Activated CD4-positive, alpha-beta memory T cell treated with anti-CD3 and anti-CD28 coated beads for 36 hours (primary cell): ENCODE measurements at regions of chr1 and their contacts with region 1.

Region 1: GRCh38 chr1:36149237-36149972 is at the start of gene TRAPPC3:
- DNase-seq: peak; percentile 100
- H3K4me3 Mint-ChIP-seq: peak within 1 kb of the TSS; percentile 100
- H3K27ac Mint-ChIP-seq: peak within 1 kb of the TSS; percentile 92
- H3K4me1 Mint-ChIP-seq: peaks cover 67% of the 10 kb centered on the region
- H3K27me3 Mint-ChIP-seq: no peaks in the 10 kb centered on the region
- total RNA-seq, gene TRAPPC3: 56.7 to 56.8 TPM

Region 2: DNA sequence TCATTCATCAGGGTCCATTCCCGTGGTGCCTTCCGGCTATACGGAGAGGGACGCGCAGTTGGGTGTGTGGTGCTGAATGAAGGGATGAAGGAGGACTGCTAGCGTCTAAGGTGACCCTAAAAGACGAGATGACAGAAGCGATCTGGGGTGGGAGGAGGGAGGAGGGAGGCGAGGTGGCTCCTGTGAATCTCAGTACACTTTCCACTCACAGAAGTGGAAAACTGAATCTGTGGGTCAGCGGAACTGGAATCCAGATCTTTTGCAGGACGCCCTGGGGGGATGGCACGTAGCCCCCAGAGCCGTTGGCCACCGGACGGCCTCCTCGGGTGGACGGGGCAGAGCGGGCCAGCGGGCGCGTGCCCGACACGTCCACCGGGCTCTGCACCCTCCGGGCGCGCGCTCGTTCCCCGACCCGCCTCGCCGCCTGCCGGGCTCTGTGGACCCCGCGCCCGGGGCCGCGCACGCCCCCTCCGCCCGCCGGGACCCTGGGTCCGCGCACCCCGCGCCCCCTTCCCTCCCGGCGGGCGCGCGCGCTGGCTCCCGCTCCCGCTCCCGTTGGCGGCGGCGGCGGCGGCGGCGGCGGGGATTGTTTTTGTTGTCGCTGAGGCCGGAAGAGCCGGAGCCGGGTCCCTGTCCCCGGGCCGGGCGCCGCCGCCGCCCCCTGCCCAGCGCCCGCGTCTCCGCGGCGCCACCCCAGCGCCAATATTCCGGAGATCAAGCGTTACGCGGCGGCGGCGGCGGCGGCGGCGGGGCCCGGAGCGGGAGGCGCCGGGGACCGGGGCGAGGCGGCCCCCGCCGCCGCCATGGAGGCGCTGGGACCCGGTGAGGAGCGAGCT is 341.6 kb before region 1 on chr1 and contains the start of gene AGO4:
- CTCF ChIA-PET with region 1: no interaction called
- POLR2A ChIA-PET with region 1: no interaction called
- intact Hi-C with region 1: no loop called
- DNase-seq: peak; percentile 41
- H3K4me3 Mint-ChIP-seq: peak within 1 kb of the TSS; percentile 86
- H3K27ac Mint-ChIP-seq: peak within 1 kb of the TSS; percentile 81
- H3K4me1 Mint-ChIP-seq: peaks cover 36% of the 10 kb centered on the region
- H3K27me3 Mint-ChIP-seq: no peaks in the 10 kb centered on the region
- total RNA-seq, gene AGO4: 5.1 to 6.0 TPM

Region 3: GRCh38 chr1:35866991-35867390 is 282.4 kb before region 1 on chr1:
- CTCF ChIA-PET with region 1: no interaction called
- POLR2A ChIA-PET with region 1: no interaction called
- intact Hi-C with region 1: no loop called
- DNase-seq: no peak
- H3K4me3 Mint-ChIP-seq: no peak overlapping the region
- H3K27ac Mint-ChIP-seq: no peak overlapping the region
- H3K4me1 Mint-ChIP-seq: no peaks in the 10 kb centered on the region
- H3K27me3 Mint-ChIP-seq: no peaks in the 10 kb centered on the region

Region 4: DNA sequence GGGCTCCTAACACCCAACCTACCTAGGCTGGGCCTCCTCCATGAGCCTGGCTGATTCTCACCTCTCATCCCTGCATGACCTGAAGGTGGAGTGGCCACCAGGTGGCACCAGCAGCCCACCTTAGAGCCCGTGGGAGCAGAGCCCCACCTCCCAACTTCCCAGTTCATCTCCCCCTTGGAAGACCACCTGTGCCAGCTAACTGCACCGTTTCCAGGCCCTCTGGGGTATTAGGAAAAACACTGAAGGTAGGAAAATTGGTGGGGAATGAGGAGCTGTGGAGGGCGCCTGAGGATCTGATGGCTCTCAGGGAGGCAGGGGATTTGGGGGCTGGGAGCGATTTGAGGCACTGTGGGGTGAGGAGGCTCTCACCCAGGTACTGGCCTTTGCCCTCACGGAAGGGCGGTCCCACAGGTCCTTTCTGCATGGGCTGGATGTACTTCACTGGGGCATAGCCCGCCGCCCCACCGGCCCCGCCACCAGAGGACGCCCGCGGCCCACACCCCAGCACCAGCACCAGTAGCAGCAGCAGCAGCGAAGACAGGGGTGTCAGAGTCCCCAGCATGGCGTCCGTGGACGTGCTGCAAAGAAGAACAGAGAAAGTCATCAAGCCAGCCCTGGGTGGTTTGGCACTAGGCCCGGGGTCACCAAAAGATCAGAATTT is 49.6 kb before region 1 on chr1:
- CTCF ChIA-PET with region 1: interaction called, 10 read pairs
- POLR2A ChIA-PET with region 1: interaction called, 3 read pairs
- intact Hi-C with region 1: loop called (anchors 5 kb)
- DNase-seq: peak; percentile 84
- H3K4me3 Mint-ChIP-seq: no peak overlapping the region
- H3K27ac Mint-ChIP-seq: no peak overlapping the region
- H3K4me1 Mint-ChIP-seq: no peaks in the 10 kb centered on the region
- H3K27me3 Mint-ChIP-seq: no peaks in the 10 kb centered on the region

Region 5: GRCh38 chr1:36170643-36171412 is 21.4 kb after region 1 on chr1:
- CTCF ChIA-PET with region 1: interaction called, 10 read pairs
- POLR2A ChIA-PET with region 1: no interaction called
- intact Hi-C with region 1: no loop called
- DNase-seq: no peak
- H3K4me3 Mint-ChIP-seq: no peak overlapping the region
- H3K27ac Mint-ChIP-seq: no peak overlapping the region
- H3K4me1 Mint-ChIP-seq: peaks cover 24% of the 10 kb centered on the region
- H3K27me3 Mint-ChIP-seq: no peaks in the 10 kb centered on the region

Region 6: GRCh38 chr1:36279110-36279788 is 129.8 kb after region 1 on chr1:
- CTCF ChIA-PET with region 1: interaction called, 38 read pairs
- POLR2A ChIA-PET with region 1: no interaction called
- intact Hi-C with region 1: no loop called
- DNase-seq: no peak
- H3K4me3 Mint-ChIP-seq: no peak overlapping the region
- H3K27ac Mint-ChIP-seq: peak overlapping the region; percentile 18
- H3K4me1 Mint-ChIP-seq: peaks cover 38% of the 10 kb centered on the region
- H3K27me3 Mint-ChIP-seq: no peaks in the 10 kb centered on the region

Region 7: GRCh38 chr1:36306902-36307456 is 157.6 kb after region 1 on chr1:
- CTCF ChIA-PET with region 1: interaction called, 11 read pairs
- POLR2A ChIA-PET with region 1: interaction called, 3 read pairs
- intact Hi-C with region 1: no loop called
- DNase-seq: peak; percentile 95
- H3K4me3 Mint-ChIP-seq: peak overlapping the region; percentile 95
- H3K27ac Mint-ChIP-seq: peak overlapping the region; percentile 79
- H3K4me1 Mint-ChIP-seq: peaks cover 43% of the 10 kb centered on the region
- H3K27me3 Mint-ChIP-seq: no peaks in the 10 kb centered on the region

Region 8: GRCh38 chr1:36420836-36421664 is 271.6 kb after region 1 on chr1:
- CTCF ChIA-PET with region 1: interaction called, 11 read pairs
- POLR2A ChIA-PET with region 1: no interaction called
- intact Hi-C with region 1: loop called (anchors 2 kb)
- DNase-seq: peak; percentile 96
- H3K4me3 Mint-ChIP-seq: no peak overlapping the region
- H3K27ac Mint-ChIP-seq: peak overlapping the region; percentile 90
- H3K4me1 Mint-ChIP-seq: peaks cover 21% of the 10 kb centered on the region
- H3K27me3 Mint-ChIP-seq: no peaks in the 10 kb centered on the region